Activated CD4-positive, alpha-beta T cell treated with anti-CD3 and anti-CD28 coated beads, Interleukin-2, amount 10 ng/mL, durations not matched to agents 24 days and 14 days (primary cell): ENCODE measurements at regions of chr12 and their contacts with region 1.

Region 1: GRCh38 chr12:75511116-75512048 is at the start of gene KRR1:
- DNase-seq: peak; percentile 97
- H3K4me3 Mint-ChIP-seq: peak within 1 kb of the TSS; percentile 98
- H3K27ac Mint-ChIP-seq: peak within 1 kb of the TSS; percentile 100
- H3K4me1 Mint-ChIP-seq: peaks cover 31% of the 10 kb centered on the region
- H3K27me3 Mint-ChIP-seq: peaks cover 3% of the 10 kb centered on the region
- total RNA-seq, gene KRR1: 134 and 141 TPM in 2 replicates

Region 2: DNA sequence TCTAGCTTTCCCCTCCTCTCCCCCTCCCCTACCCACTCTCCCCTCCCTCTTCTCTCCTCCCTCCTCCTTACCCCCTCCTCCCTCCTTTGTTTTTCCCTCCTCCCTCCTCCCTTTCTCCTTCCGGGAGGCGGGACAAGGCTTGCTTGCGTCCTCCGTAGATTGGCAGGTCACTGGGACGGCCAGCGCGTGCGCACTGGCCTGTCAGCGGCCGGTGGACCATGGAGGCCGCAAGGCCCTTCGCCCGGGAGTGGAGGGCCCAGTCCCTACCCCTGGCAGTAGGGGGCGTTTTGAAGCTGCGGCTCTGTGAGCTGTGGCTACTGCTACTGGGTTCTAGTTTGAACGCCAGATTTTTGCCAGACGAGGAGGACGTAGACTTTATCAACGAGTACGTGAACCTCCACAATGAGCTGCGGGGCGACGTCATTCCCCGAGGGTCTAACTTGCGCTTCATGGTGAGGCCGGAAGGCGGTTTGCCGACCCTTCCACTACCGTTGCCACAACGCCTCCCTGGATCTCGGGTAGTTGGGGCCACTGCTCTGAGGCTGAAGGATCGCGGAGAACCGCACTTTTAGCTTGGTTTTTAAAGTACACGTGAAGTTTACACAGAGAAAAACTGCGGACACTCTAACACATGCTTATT is 120.4 kb before region 1 on chr12 and contains the start of gene GLIPR1L2:
- intact Hi-C with region 1: loop called (anchors 1 kb)
- DNase-seq: peak; percentile 95
- H3K4me3 Mint-ChIP-seq: peak within 1 kb of the TSS; percentile 94
- H3K27ac Mint-ChIP-seq: peak within 1 kb of the TSS; percentile 92
- H3K4me1 Mint-ChIP-seq: peaks cover 27% of the 10 kb centered on the region
- H3K27me3 Mint-ChIP-seq: peaks cover 3% of the 10 kb centered on the region
- total RNA-seq, gene GLIPR1L2: 0.36 TPM in 1 of 2 replicates, not detected in the other

Region 3: DNA sequence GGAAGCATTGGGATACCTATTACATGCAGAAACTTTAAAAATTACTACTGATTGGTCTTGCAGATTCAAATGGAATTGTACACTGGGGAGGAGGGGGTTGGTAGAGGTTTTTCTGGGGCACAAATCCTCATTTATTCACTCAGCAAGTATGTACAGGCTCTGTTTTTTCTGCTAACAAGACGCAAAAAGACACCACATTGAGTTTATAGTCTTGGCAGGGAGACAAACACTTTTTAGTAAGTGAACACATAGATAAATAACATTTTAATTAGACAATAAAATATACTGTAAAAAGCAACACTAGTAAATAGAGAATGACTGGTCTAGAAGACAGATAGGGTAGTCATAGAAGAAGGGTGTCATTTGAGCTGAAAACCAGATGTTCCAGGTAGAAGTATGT is 96.7 kb before region 1 on chr12:
- intact Hi-C with region 1: no loop called
- DNase-seq: no peak
- H3K4me3 Mint-ChIP-seq: no peak overlapping the region
- H3K27ac Mint-ChIP-seq: no peak overlapping the region
- H3K4me1 Mint-ChIP-seq: no peaks in the 10 kb centered on the region
- H3K27me3 Mint-ChIP-seq: peaks cover 6% of the 10 kb centered on the region

Region 4: GRCh38 chr12:75489613-75490210 is 21.7 kb before region 1 on chr12:
- intact Hi-C with region 1: loop called (anchors 2 kb)
- DNase-seq: peak; percentile 63
- H3K4me3 Mint-ChIP-seq: peak overlapping the region; percentile 39
- H3K27ac Mint-ChIP-seq: peak overlapping the region; percentile 52
- H3K4me1 Mint-ChIP-seq: peaks cover 22% of the 10 kb centered on the region
- H3K27me3 Mint-ChIP-seq: no peaks in the 10 kb centered on the region